Mammary epithelial cell (primary cell): ENCODE measurements at regions of chr5 and their contacts with region 1.

Region 1: DNA sequence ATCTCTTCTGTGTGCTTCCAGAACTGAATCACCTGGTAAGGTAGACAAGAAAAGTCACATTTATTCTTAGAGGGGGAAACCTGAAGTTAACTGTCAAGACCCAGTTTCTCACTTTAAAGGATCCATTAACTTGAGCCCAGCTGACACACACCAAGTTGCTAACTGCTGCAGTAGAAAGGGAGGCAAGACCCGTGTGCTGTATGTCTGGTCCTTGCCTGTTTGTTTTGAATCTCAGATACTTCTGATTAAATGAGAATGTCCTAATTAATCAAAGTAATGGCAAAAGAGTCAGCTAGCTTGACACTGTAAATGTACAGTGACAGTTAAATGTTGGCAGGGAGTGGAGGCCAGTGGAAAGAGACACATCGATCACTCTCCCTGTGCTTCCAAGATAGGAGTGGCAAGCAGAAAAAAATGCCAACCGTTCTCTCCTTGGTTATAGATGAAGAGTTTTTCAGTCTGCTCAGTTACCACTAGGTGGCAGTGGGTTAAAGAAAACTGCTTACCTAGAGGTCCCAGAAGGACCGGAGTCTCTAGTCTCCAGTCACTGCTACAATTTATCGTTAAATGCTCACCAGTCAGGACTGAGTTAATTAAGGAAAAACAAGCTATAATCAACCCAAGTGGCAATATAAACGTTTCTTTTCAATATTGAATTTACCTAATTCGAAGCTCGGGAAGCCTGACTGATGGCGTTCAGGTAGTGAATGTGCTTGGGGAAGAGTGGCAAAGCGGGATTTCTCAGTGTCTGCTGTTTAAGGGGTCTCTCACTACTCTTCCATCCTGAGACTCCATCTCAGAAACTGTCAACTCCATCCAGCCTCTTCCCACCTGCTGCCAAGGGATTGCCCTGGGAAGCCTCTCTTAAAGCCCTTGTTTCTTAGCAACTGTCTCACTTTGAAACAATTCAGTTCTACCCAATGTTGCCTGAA is 18.4 kb downstream of the LSM11 start:
- DNase-seq: peak; percentile 59
- H3K4me3 ChIP-seq: no peak overlapping the region
- H3K27ac ChIP-seq: no peak overlapping the region
- H3K4me1 ChIP-seq: no peaks in the 10 kb centered on the region
- H3K27me3 ChIP-seq: no peaks in the 10 kb centered on the region
- CTCF ChIP-seq: peak; percentile 55 to 81

Region 2: GRCh38 chr5:157820593-157821252 is 58.8 kb after region 1 on chr5:
- CTCF ChIA-PET with region 1: no interaction called
- dilution Hi-C with region 1: no loop called
- in situ Hi-C with region 1: no loop called
- intact Hi-C with region 1: loop called (anchors 5 kb)
- DNase-seq: peak; percentile 14
- H3K4me3 ChIP-seq: no peak overlapping the region
- H3K27ac ChIP-seq: no peak overlapping the region
- H3K4me1 ChIP-seq: no peaks in the 10 kb centered on the region
- H3K27me3 ChIP-seq: no peaks in the 10 kb centered on the region
- CTCF ChIP-seq: peak; percentile 47 to 53

Region 3: DNA sequence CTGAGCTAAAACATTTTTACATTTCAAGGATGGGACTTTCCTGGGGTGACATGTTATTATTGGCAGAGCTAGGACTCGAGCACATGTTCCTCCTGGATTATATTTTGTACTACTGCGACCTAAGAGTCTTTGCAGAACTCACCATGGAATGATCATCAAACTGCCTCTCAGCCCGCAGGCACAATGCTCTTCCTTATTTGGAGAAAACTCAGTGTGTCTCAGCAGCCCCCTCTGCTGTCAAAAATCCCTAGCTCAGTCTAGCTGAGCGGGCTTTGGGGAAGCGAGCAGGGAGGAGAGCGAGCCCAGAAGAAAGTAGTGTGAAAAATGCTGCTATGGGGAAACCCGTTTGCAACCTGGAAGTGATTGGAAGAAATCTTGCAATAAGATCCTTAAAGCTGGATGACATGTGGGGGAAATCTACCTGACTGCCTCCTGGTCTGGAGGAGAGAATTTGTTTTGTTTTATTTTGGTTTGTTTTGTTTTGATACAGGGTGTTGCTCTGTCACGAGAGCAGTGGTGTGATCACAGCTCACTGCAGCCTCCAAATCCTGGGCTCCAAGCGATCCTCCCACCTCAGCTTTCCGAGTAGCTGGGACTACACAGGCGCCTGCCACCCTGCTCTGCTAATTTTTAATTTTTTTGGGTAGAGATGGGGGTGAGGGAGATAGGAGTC is 186.9 kb after region 1 on chr5:
- CTCF ChIA-PET with region 1: no interaction called
- dilution Hi-C with region 1: no loop called
- in situ Hi-C with region 1: no loop called
- intact Hi-C with region 1: loop called (anchors 1 kb)
- DNase-seq: peak; percentile 89
- H3K4me3 ChIP-seq: no peak overlapping the region
- H3K27ac ChIP-seq: no peak overlapping the region
- H3K4me1 ChIP-seq: no peaks in the 10 kb centered on the region
- H3K27me3 ChIP-seq: no peaks in the 10 kb centered on the region
- CTCF ChIP-seq: peak; percentile 82 to 93

Region 4: GRCh38 chr5:158064334-158065123 is 302.6 kb after region 1 on chr5:
- CTCF ChIA-PET with region 1: no interaction called
- dilution Hi-C with region 1: no loop called
- in situ Hi-C with region 1: no loop called
- intact Hi-C with region 1: loop called (anchors 10 kb)
- DNase-seq: no peak
- H3K4me3 ChIP-seq: no peak overlapping the region
- H3K27ac ChIP-seq: no peak overlapping the region
- H3K4me1 ChIP-seq: no peaks in the 10 kb centered on the region
- H3K27me3 ChIP-seq: no peaks in the 10 kb centered on the region
- CTCF ChIP-seq: no peak

Region 5: DNA sequence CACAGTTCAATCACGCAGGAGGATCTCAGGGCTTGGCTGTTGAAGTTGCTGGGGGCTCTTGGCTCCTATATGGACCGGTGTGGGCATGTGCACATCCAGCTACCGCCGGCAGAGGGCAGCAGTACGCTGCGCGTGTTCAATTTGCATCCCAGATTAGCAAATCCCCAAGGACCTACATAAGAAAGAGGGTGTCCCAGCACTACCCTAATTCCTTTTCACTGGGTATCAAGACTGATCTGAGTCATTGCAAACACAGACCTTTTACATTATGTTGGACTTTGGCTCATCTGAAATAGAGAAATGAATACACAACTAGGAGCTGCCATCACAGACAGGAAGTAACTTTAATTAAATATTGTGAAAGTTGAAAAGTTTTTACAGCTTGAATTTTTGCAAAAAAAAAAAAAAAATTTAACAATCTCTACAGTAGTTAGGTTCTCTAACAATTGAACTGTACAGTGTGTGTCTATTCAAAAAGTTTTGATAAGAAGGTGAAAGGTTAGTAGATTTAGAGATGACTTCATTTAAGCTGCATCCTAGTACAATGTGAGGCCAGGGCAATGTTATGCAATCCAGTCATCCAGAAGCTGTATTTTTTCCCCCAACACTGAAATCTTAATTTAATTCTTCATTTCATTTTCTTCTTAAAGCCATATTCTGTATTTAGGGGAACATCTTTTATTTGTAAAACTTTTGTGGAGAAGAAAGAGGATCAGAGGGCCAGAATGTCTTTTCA is 933.8 kb after region 1 on chr5:
- CTCF ChIA-PET with region 1: no interaction called
- dilution Hi-C with region 1: no loop called
- in situ Hi-C with region 1: no loop called
- intact Hi-C with region 1: loop called (anchors 2 kb)
- DNase-seq: peak; percentile 17
- H3K4me3 ChIP-seq: no peak overlapping the region
- H3K27ac ChIP-seq: no peak overlapping the region
- H3K4me1 ChIP-seq: no peaks in the 10 kb centered on the region
- H3K27me3 ChIP-seq: peaks cover 2% of the 10 kb centered on the region
- CTCF ChIP-seq: peak; percentile 90 to 97

Region 6: GRCh38 chr5:159133041-159133741 is 1371.2 kb after region 1 on chr5:
- CTCF ChIA-PET with region 1: no interaction called
- dilution Hi-C with region 1: no loop called
- in situ Hi-C with region 1: no loop called
- intact Hi-C with region 1: loop called (anchors 5 kb)
- DNase-seq: peak; percentile 38
- H3K4me3 ChIP-seq: no peak overlapping the region
- H3K27ac ChIP-seq: no peak overlapping the region
- H3K4me1 ChIP-seq: no peaks in the 10 kb centered on the region
- H3K27me3 ChIP-seq: no peaks in the 10 kb centered on the region
- CTCF ChIP-seq: peak; percentile 62 to 69